Gastrocnemius medialis (tissue), 4 donors: ENCODE measurements at regions of chr10 and their contacts with region 1.

Region 1: GRCh38 chr10:29969255-29970011 is 90.0 kb downstream of the JCAD start:
- DNase-seq: peak; percentile 86 to 93
- ATAC-seq: peak; percentile 96
- H3K4me3 ChIP-seq: no peak overlapping the region
- H3K27ac ChIP-seq: peak overlapping the region; percentile 81 to 86 (median 82)
- H3K4me1 ChIP-seq: peaks cover 16 to 17% of the 10 kb centered on the region in 2 donors
- H3K27me3 ChIP-seq: no peaks in the 10 kb centered on the region
- CTCF ChIP-seq: no peak
- POLR2A ChIP-seq: peak; percentile 32 to 67

Region 2: GRCh38 chr10:29646238-29646902 is 323.1 kb before region 1 on chr10:
- in situ Hi-C with region 1: loop called in 2 of 4 experiments (anchors 25 kb)
- intact Hi-C with region 1: loop called (anchors 5 kb)
- DNase-seq: peak; percentile 83 to 88
- ATAC-seq: peak; percentile 45 to 52
- H3K4me3 ChIP-seq: peak overlapping the region in 3 of 4 donors; percentile 21 to 40 (median 22)
- H3K27ac ChIP-seq: peak overlapping the region; percentile 95 to 96 (median 96)
- H3K4me1 ChIP-seq: peaks cover 61 to 69% of the 10 kb centered on the region in 2 donors
- H3K27me3 ChIP-seq: no peaks in the 10 kb centered on the region
- CTCF ChIP-seq: no peak
- POLR2A ChIP-seq: peak in 1 of 2 donors; percentile 47